ENCODE measurements at regions of chr17 and their contacts with region 1.

Region 1: GRCh38 chr17:80454557-80455335 is 21.7 kb downstream of the NPTX1 start:
- DNase-seq: peak; percentile 95
- ATAC-seq: peak; percentile 92
- H3K4me3 Mint-ChIP-seq: peak overlapping the region; percentile 92
- H3K27ac Mint-ChIP-seq: peak overlapping the region; percentile 92
- H3K4me1 Mint-ChIP-seq: peaks cover 15% of the 10 kb centered on the region
- H3K27me3 Mint-ChIP-seq: peaks cover 25% of the 10 kb centered on the region
- CTCF ChIP-seq: no peak

Region 2: DNA sequence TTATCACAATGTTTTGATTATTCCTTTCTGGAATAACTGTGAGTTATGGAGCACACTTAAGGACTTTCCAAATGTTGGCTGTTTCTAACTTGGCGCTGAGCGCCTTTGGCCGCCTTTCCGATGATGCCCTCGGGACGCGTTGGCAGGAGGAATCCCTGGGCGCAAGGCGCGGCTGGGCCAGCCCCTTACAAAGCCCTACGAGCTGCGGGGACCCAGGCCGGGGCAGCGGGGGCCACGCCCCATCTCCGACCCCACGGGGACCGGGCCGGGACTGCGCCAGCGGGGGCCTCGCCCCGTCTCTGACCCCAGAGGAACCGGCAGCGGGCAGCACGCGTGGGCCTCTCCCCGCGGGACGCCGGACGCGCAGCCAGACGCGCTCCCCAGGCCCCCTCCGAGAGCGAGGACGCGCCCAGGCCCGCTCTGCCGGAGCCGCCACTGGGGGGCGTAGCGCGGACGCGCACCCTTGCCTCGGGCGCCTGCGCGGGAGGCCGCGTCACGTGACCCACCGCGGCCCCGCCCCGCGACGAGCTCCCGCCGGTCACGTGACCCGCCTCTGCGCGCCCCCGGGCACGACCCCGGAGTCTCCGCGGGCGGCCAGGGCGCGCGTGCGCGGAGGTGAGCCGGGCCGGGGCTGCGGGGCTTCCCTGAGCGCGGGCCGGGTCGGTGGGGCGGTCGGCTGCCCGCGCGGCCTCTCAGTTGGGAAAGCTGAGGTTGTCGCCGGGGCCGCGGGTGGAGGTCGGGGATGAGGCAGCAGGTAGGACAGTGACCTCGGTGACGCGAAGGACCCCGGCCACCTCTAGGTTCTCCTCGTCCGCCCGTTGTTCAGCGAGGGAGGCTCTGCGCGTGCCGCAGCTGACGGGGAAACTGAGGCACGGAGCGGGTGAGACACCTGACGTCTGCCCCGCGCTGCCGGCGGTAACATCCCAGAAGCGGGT is 353.5 kb before region 1 on chr17 and contains the start of gene GAA:
- CTCF ChIA-PET with region 1: no interaction called
- POLR2A ChIA-PET with region 1: interaction called, 10 read pairs
- intact Hi-C with region 1: no loop called
- DNase-seq: peak; percentile 96
- ATAC-seq: peak; percentile 90
- H3K4me3 Mint-ChIP-seq: peak within 1 kb of the TSS; percentile 86
- H3K27ac Mint-ChIP-seq: peak within 1 kb of the TSS; percentile 83
- H3K4me1 Mint-ChIP-seq: peaks cover 23% of the 10 kb centered on the region
- H3K27me3 Mint-ChIP-seq: peaks cover 3% of the 10 kb centered on the region
- CTCF ChIP-seq: peak; percentile 63
- total RNA-seq, gene GAA: 19.6 and 20.2 TPM in 2 replicates

Region 3: DNA sequence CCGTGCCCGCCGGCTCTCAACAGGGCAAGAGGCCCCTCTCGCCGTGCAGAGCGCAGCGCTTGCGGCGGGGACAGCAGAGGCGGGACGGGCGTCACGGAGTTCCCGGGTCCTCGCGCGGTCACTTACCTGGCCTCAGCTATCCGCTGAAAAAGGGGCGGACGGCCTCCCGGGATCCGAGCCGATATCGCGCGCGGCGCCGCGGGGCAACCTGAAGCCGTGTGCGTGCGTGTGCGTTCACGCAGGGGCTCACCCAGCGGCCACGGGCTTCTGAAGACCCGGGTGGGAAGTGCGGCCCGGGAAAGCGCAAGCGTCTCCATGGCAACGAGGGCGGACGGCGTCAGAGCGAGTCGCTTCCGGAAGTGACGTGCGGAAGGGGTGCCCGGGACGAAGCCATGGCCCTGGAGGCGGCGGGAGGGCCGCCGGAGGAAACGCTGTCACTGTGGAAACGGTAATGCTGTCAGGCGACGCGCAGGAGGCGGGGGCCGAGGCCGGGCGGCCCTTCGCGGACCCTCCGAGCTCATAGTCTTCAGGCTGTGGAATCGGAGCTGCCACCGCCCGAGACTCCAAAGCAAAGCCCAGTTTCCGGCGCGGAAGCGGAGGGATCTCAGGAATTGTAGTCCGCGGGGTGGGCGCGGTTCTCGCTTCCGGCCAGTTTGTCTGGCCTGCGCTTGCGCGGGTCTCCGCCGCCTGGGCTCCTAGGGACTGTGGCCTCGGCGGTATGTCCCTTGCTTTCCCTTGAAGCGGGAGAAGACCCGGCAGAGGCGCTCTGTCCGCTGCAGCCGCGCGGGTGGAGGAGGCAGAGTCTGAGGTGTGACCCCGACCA is 39.7 kb before region 1 on chr17 and contains the start of gene ENDOV:
- CTCF ChIA-PET with region 1: no interaction called
- POLR2A ChIA-PET with region 1: interaction called, 24 read pairs
- intact Hi-C with region 1: loop called (anchors 1 kb)
- DNase-seq: peak; percentile 90
- ATAC-seq: peak; percentile 88
- H3K4me3 Mint-ChIP-seq: peak within 1 kb of the TSS; percentile 89
- H3K27ac Mint-ChIP-seq: peak within 1 kb of the TSS; percentile 81
- H3K4me1 Mint-ChIP-seq: peaks cover 26% of the 10 kb centered on the region
- H3K27me3 Mint-ChIP-seq: peaks cover 17% of the 10 kb centered on the region
- CTCF ChIP-seq: no peak
- total RNA-seq, gene ENDOV: 26.8 and 28.1 TPM in 2 replicates

Region 4: GRCh38 chr17:80477647-80478478 is 23.1 kb after region 1 on chr17:
- CTCF ChIA-PET with region 1: no interaction called
- POLR2A ChIA-PET with region 1: interaction called, 12 read pairs
- intact Hi-C with region 1: loop called (anchors 1 kb)
- DNase-seq: peak; percentile 32
- ATAC-seq: no peak
- H3K4me3 Mint-ChIP-seq: no peak overlapping the region
- H3K27ac Mint-ChIP-seq: no peak overlapping the region
- H3K4me1 Mint-ChIP-seq: peaks cover 19% of the 10 kb centered on the region
- H3K27me3 Mint-ChIP-seq: peaks cover 62% of the 10 kb centered on the region
- CTCF ChIP-seq: no peak

Region 5: GRCh38 chr17:80544655-80545498 is 90.1 kb after region 1 on chr17 and contains the start of gene RPTOR:
- CTCF ChIA-PET with region 1: no interaction called
- POLR2A ChIA-PET with region 1: interaction called, 23 read pairs
- intact Hi-C with region 1: loop called (anchors 1 kb)
- DNase-seq: peak; percentile 83
- ATAC-seq: peak; percentile 99
- H3K4me3 Mint-ChIP-seq: peak within 1 kb of the TSS; percentile 96
- H3K27ac Mint-ChIP-seq: peak within 1 kb of the TSS; percentile 87
- H3K4me1 Mint-ChIP-seq: peaks cover 24% of the 10 kb centered on the region
- H3K27me3 Mint-ChIP-seq: peaks cover 9% of the 10 kb centered on the region
- CTCF ChIP-seq: no peak
- total RNA-seq, gene RPTOR: 48.9 and 65.9 TPM in 2 replicates

Region 6: GRCh38 chr17:80908776-80909175 is 454.0 kb after region 1 on chr17:
- CTCF ChIA-PET with region 1: no interaction called
- POLR2A ChIA-PET with region 1: interaction called, 10 read pairs
- intact Hi-C with region 1: no loop called
- DNase-seq: no peak
- ATAC-seq: no peak
- H3K4me3 Mint-ChIP-seq: no peak overlapping the region
- H3K27ac Mint-ChIP-seq: no peak overlapping the region
- H3K4me1 Mint-ChIP-seq: peaks cover 56% of the 10 kb centered on the region
- H3K27me3 Mint-ChIP-seq: no peaks in the 10 kb centered on the region
- CTCF ChIP-seq: no peak

Region 7: DNA sequence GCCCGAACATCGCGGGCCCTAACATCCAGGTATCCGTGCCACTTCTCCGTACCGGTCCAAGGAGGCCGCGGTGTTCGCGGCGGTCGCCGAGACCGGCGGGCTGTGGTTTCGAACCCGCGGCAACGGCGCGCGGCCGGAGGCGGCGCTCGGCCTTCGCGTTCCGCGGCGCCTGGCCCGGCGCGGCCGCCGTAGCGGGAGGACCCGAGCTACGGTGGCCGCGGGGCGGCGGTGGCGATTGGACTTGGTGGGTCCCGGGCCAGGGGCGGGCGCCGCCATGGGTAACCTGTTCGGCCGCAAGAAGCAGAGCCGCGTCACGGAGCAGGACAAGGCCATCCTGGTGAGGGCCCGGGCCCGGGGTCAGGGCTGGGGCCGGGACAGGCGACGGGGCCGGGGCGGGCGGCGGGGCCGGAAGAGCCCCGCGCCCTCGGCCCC is 536.9 kb after region 1 on chr17 and contains the start of gene CHMP6:
- CTCF ChIA-PET with region 1: no interaction called
- POLR2A ChIA-PET with region 1: interaction called, 5 read pairs
- intact Hi-C with region 1: loop called (anchors 1 kb)
- DNase-seq: peak; percentile 81
- ATAC-seq: peak; percentile 62
- H3K4me3 Mint-ChIP-seq: peak within 1 kb of the TSS; percentile 83
- H3K27ac Mint-ChIP-seq: peak within 1 kb of the TSS; percentile 50
- H3K4me1 Mint-ChIP-seq: peaks cover 43% of the 10 kb centered on the region
- H3K27me3 Mint-ChIP-seq: no peaks in the 10 kb centered on the region
- CTCF ChIP-seq: no peak
- total RNA-seq, gene CHMP6: 35.1 and 36.6 TPM in 2 replicates

Measured in activated B cell treated with CpG ODN at 0.5 μM for 24 hours (primary cell).